PC-9 (cell line): ENCODE measurements at regions of chr7 and their contacts with region 1.

Region 1: DNA sequence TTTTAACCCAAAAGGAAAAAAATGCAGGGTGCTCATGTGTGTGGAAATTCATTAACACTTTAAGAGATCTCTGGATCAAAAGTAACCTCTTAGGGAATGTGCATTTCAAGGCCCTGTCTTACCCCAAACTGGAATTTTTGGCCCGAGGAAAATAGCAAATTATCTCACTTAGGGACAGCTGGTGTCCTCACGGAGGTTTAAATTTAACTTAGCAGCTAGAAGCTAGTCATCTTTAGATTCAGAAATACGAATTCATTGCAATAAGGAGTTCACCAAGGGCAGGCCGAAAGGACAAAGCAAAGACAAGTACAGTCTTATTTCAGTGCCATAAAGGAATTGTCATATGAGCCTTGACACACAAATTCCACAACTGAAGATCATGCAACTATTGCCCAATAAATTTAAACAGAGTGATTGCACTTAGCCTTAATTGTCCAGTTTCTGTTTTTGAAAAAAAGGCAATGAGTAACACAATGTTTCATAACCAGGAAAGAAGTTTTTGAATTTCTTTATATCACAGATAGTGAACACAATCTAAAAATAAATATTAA is 22.4 kb upstream of the SEMA3C start:
- DNase-seq: peak in 1 of 2 experiments; percentile 71
- H3K4me3 ChIP-seq: no peak overlapping the region
- H3K27ac ChIP-seq: peak overlapping the region; percentile 98
- H3K4me1 ChIP-seq: peaks cover 39% of the 10 kb centered on the region
- H3K27me3 ChIP-seq: no peaks in the 10 kb centered on the region
- CTCF ChIP-seq: no peak

Region 2: DNA sequence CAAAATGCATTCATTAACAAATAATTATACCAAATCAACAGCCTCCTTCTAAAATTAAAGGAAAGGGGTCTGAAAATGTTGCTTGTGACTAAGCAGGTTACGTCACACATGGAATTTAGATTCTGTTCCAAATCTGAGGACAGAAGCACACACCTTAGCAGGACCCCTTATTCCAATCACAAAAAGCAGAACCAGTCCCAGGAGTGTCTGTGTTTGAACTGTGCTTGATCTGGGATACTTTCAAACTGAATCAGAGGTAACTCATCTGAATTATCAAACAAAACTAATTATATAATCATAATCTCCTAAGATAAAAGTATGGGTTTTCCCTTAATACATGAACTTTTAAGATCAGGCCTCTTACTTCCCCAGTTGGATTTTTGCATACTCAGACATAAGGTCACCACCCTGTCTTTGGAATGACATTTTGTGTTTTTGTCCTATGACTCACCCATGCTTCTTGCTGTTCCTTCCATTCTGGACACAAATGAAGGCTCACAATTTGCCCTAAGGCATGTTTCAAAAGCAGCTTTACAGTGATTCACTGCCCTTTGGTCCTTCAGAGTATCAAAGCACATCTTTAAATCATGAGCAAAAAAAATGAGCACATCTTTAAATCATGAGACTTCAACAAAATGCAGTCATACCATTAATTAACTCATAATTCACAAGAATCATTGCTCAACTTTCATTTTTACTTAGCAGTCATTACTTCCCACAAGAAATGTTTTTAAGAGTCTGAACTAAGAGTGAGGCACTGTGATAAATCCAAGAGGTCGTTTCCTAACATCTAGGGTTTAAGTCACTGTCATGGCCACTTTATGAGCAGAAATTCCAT is 57.9 kb before region 1 on chr7:
- CTCF ChIA-PET with region 1: no interaction called
- POLR2A ChIA-PET with region 1: no interaction called
- intact Hi-C with region 1: loop called (anchors 1 kb)
- DNase-seq: peak; percentile 66 to 99
- H3K4me3 ChIP-seq: no peak overlapping the region
- H3K27ac ChIP-seq: peak overlapping the region; percentile 82
- H3K4me1 ChIP-seq: peaks cover 32% of the 10 kb centered on the region
- H3K27me3 ChIP-seq: no peaks in the 10 kb centered on the region
- CTCF ChIP-seq: no peak

Region 3: DNA sequence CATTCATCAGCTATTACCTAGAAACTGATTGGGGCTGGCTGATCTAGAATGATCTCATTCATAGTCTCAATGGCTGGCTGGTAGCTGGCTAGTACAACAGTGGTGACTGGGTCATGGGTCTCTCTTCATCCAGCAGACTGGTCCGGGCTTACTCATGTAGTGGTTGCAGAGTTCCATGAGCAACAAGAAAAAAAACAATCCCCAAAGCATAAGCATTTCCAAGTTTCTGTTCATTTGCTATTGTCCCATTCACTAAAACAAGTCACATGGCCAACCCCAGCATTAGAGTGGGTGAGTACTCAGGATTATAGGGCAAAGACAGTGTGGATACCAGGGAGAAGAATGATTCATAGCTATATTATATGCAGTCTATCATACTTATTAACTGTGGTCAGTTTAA is 62.8 kb after region 1 on chr7:
- CTCF ChIA-PET with region 1: no interaction called
- POLR2A ChIA-PET with region 1: no interaction called
- intact Hi-C with region 1: no loop called
- DNase-seq: no peak
- H3K4me3 ChIP-seq: no peak overlapping the region
- H3K27ac ChIP-seq: no peak overlapping the region
- H3K4me1 ChIP-seq: no peaks in the 10 kb centered on the region
- H3K27me3 ChIP-seq: no peaks in the 10 kb centered on the region
- CTCF ChIP-seq: no peak

Region 4: GRCh38 chr7:81111358-81111757 is 170.1 kb after region 1 on chr7:
- CTCF ChIA-PET with region 1: no interaction called
- POLR2A ChIA-PET with region 1: interaction called, 10 read pairs
- intact Hi-C with region 1: no loop called
- DNase-seq: peak; percentile 17 to 47
- H3K4me3 ChIP-seq: no peak overlapping the region
- H3K27ac ChIP-seq: no peak overlapping the region
- H3K4me1 ChIP-seq: no peaks in the 10 kb centered on the region
- H3K27me3 ChIP-seq: no peaks in the 10 kb centered on the region
- CTCF ChIP-seq: no peak

Region 5: GRCh38 chr7:81173766-81174281 is 232.5 kb after region 1 on chr7:
- CTCF ChIA-PET with region 1: no interaction called
- POLR2A ChIA-PET with region 1: no interaction called
- intact Hi-C with region 1: loop called (anchors 5 kb)
- DNase-seq: peak in 1 of 2 experiments; percentile 48
- H3K4me3 ChIP-seq: no peak overlapping the region
- H3K27ac ChIP-seq: no peak overlapping the region
- H3K4me1 ChIP-seq: peaks cover 13% of the 10 kb centered on the region; the same call in 1 of the 2 replicates
- H3K27me3 ChIP-seq: no peaks in the 10 kb centered on the region
- CTCF ChIP-seq: no peak